ENCODE measurements at regions of chr6 and their contacts with region 1.

Region 1: DNA sequence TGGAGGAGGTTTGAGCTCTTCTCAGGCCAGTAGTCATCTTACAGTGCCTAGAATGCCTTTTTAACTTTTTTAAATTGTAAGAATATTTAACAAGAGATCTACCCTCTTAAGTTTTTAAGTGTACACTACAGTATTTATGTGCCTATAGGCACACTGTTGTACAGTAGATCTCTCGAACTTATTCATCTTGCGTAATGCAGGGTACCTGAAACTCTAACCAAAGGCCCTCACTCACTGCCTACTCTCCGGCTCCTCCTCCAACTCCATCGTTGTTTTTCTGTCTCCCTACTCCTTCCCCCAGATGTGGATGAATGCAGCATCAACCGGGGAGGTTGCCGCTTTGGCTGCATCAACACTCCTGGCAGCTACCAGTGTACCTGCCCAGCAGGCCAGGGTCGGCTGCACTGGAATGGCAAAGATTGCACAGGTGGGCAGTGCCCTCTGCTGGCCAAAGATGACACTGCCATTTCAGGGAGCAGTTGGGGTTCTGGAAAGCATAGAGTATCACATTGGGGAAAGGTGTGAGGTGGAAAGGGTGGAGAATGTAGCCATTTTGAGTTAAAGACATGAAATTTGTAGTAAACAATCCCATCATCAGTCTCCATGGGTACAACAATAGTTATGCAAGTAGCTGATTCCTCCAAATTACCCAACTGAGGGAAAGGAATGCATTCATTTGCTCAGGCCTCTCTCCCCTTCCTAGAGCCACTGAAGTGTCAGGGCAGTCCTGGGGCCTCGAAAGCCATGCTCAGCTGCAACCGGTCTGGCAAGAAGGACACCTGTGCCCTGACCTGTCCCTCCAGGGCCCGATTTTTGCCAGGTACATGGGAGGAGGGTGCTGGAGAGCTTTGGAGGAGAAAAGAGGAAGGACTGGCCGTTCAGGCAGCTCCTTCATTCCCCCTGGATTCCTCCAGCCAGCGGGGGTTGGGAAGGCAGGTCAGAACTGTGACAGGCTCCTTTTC is 18.4 kb upstream of the ZNF76 start:
- DNase-seq: peak; percentile 87

Region 2: DNA sequence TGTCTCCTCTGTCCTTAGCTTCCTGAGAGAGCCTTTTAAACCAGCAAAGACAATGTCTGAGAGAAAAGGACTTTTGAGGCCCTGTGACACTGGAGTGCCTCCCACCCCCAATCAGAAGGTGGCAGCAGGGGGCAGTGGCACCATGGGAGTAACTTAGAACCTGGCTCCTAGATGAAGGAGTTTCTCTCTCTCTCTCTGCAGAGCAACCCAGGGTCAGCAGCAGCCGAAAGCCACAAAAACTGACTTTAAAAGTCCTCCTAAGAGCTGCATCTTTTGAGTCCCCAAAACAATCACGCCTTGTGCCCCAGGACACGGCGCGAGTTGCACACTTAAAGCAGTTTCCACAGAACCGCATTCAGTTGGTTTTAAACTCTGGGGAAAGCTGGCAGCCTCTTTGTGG is 94.7 kb before region 1 on chr6:
- CTCF ChIA-PET with region 1: interaction called, 12 read pairs
- POLR2A ChIA-PET with region 1: interaction called, 3 read pairs
- DNase-seq: peak; percentile 33

Region 3: GRCh38 chr6:35203680-35204079 is 37.4 kb before region 1 on chr6:
- CTCF ChIA-PET with region 1: interaction called, 26 read pairs
- POLR2A ChIA-PET with region 1: no interaction called
- DNase-seq: no peak

Region 4: DNA sequence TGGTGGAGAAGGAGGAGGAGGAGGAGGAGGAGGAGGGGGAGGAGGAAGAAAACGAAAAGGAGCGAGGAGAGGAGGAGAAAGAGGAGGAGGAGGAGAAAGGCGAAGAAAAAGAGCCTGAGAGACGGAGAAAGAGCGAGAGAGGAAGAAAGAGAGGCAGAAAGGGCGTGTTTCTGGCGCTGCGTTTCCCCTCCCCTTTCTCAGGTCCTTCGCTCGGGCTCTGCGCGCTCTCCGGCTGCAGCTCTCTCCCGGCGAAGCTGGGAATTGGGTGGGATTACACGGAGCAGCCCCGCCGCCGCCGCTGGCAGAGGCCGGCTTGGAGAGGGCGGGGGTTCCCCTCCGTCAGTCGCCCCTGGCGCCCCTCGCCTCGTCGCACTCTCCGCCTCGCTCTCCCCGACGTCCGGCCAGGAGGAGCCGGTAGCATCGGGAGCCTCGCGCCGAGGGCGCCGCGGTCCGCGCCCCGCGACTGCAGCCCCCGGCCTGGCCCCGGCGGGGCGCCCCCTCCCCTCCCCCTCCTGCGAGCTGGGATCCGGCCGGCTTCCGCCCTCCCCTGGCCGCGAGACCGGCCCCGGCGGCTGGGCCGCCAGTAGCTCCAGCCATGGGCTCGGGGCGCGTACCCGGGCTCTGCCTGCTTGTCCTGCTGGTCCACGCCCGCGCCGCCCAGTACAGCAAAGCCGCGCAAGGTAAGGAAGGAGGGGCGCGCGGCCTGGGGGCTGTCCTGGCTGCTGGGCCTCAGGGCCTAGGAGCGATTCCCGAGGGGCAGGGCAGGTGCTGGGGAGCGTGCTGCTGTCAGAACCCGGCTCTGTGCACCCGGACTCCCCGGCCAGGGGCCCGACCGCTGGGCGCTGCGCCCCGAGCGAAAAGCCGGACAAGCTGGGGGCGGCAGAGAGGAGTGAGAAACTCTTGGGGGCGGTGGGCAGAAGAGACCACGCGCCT is 27.0 kb before region 1 on chr6 and contains the start of gene SCUBE3:
- CTCF ChIA-PET with region 1: interaction called, 12 read pairs
- POLR2A ChIA-PET with region 1: no interaction called
- DNase-seq: peak; percentile 69

Region 5: DNA sequence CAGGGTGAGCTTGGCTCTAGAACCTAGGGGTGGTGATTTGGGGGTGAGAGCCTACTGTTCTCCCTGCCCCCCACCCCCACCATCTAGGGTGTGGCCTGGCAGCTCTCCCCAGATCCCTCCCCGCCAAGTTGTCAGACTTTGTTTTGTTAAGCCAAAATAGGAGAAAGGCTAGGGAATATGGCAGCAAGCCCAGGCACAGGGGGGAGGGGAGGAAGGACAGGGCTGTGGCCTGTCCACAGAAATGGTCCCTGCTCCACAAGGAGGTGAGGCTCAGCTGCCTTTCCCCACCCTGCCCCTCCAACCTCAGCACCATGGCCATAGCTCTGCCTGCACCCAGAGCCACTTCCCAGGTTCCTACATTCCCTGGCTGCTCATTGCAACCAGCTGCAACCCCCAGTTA is 10.2 kb before region 1 on chr6:
- CTCF ChIA-PET with region 1: interaction called, 14 read pairs
- POLR2A ChIA-PET with region 1: no interaction called
- DNase-seq: no peak

Region 6: GRCh38 chr6:36216559-36216958 is 975.4 kb after region 1 on chr6:
- CTCF ChIA-PET with region 1: no interaction called
- POLR2A ChIA-PET with region 1: no interaction called
- DNase-seq: no peak